H1 (cell line): ENCODE measurements at regions of chr5 and their contacts with region 1.

Region 1: DNA sequence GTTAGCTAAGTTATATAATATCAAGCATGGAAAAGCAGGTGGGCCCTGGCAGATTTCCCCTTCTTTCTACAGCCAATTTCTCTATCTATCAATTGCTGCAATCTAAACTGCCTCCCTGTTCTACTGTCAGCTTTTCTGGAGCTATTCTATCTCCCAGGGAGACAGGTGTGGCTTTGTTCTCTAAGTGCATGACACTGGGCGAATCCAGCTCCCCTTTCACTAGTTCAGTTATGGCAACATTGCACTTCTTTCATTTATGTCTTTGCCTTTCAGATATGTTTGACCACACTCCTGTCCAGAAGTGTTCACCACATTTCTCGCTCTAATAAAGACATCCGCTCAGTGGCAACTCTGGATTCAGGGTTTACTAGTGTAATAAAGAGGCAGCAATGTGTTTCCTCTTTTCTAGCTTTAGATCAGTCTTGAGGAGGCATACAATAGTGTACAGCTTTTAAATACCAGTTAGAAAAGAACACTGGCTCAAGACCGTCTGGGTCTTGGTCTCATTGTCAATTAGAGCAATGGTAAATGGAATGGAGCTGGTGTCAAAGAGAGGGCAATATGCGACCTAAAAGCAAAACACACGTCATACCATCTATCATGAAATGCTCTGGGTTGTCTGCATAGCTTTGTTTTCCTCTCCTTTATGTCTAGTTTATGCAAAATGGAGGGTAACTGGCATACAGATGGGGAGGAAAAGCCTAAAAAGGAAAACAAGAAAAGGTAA is 197.0 kb downstream of the SLF1 start:
- DNase-seq: no peak
- H3K4me3 ChIP-seq: no peak overlapping the region
- H3K27ac ChIP-seq: no peak overlapping the region
- H3K4me1 ChIP-seq: no peaks in the 10 kb centered on the region
- H3K27me3 ChIP-seq: no peaks in the 10 kb centered on the region
- CTCF ChIP-seq: no peak
- EP300 ChIP-seq: no peak
- POLR2A ChIP-seq: no peak
- RAD21 ChIP-seq: no peak

Region 2: GRCh38 chr5:94779684-94780083 is 35.8 kb before region 1 on chr5:
- CTCF ChIA-PET with region 1: interaction called, 11 read pairs
- POLR2A ChIA-PET with region 1: no interaction called
- DNase-seq: no peak
- H3K4me3 ChIP-seq: no peak overlapping the region
- H3K27ac ChIP-seq: no peak overlapping the region
- H3K4me1 ChIP-seq: no peaks in the 10 kb centered on the region
- H3K27me3 ChIP-seq: no peaks in the 10 kb centered on the region
- CTCF ChIP-seq: no peak
- EP300 ChIP-seq: no peak
- POLR2A ChIP-seq: no peak
- RAD21 ChIP-seq: no peak

Region 3: GRCh38 chr5:94791829-94792228 is 23.6 kb before region 1 on chr5:
- CTCF ChIA-PET with region 1: interaction called, 10 read pairs
- POLR2A ChIA-PET with region 1: no interaction called
- DNase-seq: no peak
- H3K4me3 ChIP-seq: no peak overlapping the region
- H3K27ac ChIP-seq: no peak overlapping the region
- H3K4me1 ChIP-seq: no peaks in the 10 kb centered on the region
- H3K27me3 ChIP-seq: no peaks in the 10 kb centered on the region
- CTCF ChIP-seq: no peak
- EP300 ChIP-seq: no peak
- POLR2A ChIP-seq: no peak
- RAD21 ChIP-seq: no peak

Region 4: GRCh38 chr5:94841598-94842322 is 26.3 kb after region 1 on chr5:
- CTCF ChIA-PET with region 1: no interaction called
- POLR2A ChIA-PET with region 1: no interaction called
- DNase-seq: no peak
- H3K4me3 ChIP-seq: no peak overlapping the region
- H3K27ac ChIP-seq: no peak overlapping the region
- H3K4me1 ChIP-seq: no peaks in the 10 kb centered on the region
- H3K27me3 ChIP-seq: no peaks in the 10 kb centered on the region
- CTCF ChIP-seq: no peak
- EP300 ChIP-seq: no peak
- POLR2A ChIP-seq: no peak
- RAD21 ChIP-seq: no peak

Region 5: GRCh38 chr5:94857111-94857510 is 41.6 kb after region 1 on chr5:
- CTCF ChIA-PET with region 1: no interaction called
- POLR2A ChIA-PET with region 1: no interaction called
- DNase-seq: no peak
- H3K4me3 ChIP-seq: no peak overlapping the region
- H3K27ac ChIP-seq: no peak overlapping the region
- H3K4me1 ChIP-seq: peaks cover 0 to 3% (median under 1%) of the 10 kb centered on the region in 4 experiments; a peak in 1 of 7 replicates
- H3K27me3 ChIP-seq: no peaks in the 10 kb centered on the region
- CTCF ChIP-seq: no peak
- EP300 ChIP-seq: no peak
- POLR2A ChIP-seq: no peak
- RAD21 ChIP-seq: no peak

Region 6: DNA sequence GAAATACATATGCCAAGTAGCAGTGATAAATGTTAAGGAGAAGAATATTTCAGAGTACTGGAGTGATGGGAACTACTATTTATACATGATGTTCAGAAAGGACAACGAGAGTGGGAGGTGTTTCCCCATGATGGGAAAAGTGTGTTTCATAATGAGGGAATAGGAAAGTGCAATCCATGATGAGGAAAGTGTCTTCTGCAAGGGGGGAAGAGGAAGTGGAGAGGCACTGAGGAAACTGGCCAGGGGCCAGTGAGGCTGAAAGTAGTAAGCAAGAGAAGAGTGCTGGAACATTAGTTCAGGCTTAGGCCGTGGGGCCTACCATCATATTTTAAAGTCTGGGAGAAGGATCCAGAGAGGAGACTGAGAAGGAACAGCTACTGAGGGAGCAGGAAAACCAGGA is 130.2 kb after region 1 on chr5:
- CTCF ChIA-PET with region 1: no interaction called
- POLR2A ChIA-PET with region 1: no interaction called
- DNase-seq: no peak
- H3K4me3 ChIP-seq: no peak overlapping the region
- H3K27ac ChIP-seq: no peak overlapping the region
- H3K4me1 ChIP-seq: peaks cover 0 to 3% (median 0%) of the 10 kb centered on the region in 4 experiments; a peak in 2 of 7 replicates
- H3K27me3 ChIP-seq: no peaks in the 10 kb centered on the region
- CTCF ChIP-seq: no peak
- EP300 ChIP-seq: no peak
- POLR2A ChIP-seq: no peak
- RAD21 ChIP-seq: no peak